Heart right ventricle (tissue), 16 donors: ENCODE measurements at regions of chr18 and their contacts with region 1.

Region 1: GRCh38 chr18:12308386-12309100 is 502 bp downstream of the TUBB6 start:
- DNase-seq: peak; percentile 83 to 85
- ATAC-seq: peak; percentile 75 to 88 (median 83)
- H3K4me3 ChIP-seq: peak overlapping the region; percentile 63 to 95 (median 82)
- H3K27ac ChIP-seq: peak overlapping the region; percentile 94 to 100 (median 99)
- H3K4me1 ChIP-seq: peaks cover 6 to 50% (median 35%) of the 10 kb centered on the region in 9 donors
- H3K27me3 ChIP-seq: peaks cover 0 to 29% (median 0%) of the 10 kb centered on the region in 7 donors
- CTCF ChIP-seq: no peak

Region 2: GRCh38 chr18:11553098-11553940 is 755.2 kb before region 1 on chr18:
- intact Hi-C with region 1: no loop called
- DNase-seq: no peak
- ATAC-seq: peak in 5 of 8 donors; percentile 23 to 75 (median 58)
- H3K4me3 ChIP-seq: no peak overlapping the region
- H3K27ac ChIP-seq: no peak overlapping the region
- H3K4me1 ChIP-seq: no peaks in the 10 kb centered on the region
- H3K27me3 ChIP-seq: peaks cover 0 to 17% (median 0%) of the 10 kb centered on the region in 7 donors
- CTCF ChIP-seq: peak; percentile 71 to 95 (median 89)

Region 3: DNA sequence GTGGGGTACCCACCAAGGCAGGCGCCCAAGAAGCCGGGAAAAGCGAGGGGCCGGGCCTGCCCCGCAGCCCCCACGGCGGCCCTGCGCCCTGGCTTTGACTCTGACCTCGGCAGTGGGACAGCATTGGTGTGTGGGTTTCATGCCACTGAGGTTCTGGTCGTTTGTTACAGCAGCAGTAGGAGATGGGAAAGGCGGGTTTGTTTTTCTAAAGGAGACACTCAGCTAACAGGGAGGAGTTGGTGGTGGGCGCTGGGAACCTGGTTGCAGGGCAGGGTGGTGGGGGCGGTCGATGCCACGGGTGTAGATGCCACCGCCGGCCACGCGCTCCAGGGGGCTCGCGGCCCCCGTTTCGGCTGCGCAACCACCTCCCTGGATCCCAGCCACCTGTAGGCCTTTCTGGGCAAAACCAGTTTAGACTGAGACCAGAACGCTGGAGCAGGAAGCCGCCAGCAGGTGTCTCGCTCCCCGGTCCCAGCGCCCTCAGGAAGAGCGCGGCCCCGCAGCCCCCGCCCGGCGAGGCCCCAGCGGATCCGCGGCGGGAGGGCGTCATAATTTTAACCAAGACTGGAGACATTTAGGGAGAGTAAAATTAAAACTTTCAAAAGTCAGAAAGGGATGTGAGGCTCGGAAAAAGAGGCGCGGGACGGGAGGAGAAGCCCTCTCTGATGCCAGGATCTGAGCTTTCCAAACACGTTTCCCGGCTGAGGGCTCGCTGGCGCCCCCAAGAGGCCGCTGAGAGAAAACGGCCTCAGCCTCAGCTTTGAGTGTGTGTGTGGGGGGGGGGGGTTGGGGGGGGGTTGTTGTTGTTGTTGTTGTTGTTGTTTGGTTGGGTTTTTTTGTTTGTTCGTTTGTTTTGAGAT is 36.9 kb before region 1 on chr18:
- intact Hi-C with region 1: loop called in 4 of 10 experiments (anchors 1 to 5 kb)
- DNase-seq: peak; percentile 78 to 79
- ATAC-seq: peak; percentile 82 to 95 (median 93)
- H3K4me3 ChIP-seq: peak overlapping the region in 9 of 10 donors; percentile 20 to 60 (median 47)
- H3K27ac ChIP-seq: peak overlapping the region in 9 of 10 donors; percentile 47 to 89 (median 72)
- H3K4me1 ChIP-seq: peaks cover 0 to 9% (median 3%) of the 10 kb centered on the region in 9 donors
- H3K27me3 ChIP-seq: no peaks in the 10 kb centered on the region
- CTCF ChIP-seq: peak; percentile 52 to 90 (median 70)

Region 4: DNA sequence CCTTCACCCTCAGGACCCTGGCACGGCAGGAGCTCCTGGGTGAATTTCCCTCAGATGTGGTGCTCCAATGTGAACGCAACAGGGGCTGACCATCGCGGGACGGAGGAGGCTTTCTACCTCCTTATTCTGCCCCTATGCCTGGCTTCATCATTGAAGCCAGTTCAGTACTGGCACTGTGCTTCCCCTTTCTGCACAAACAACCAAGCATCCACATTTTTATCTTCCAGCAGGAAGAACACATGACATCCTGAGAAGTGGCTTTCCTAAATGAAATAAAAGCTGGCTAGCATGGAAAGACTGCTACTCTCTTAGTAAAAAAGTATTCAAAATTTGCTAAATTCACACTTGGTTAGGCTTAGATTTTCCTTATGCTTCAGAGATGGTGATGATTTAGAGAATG is 43.6 kb after region 1 on chr18:
- intact Hi-C with region 1: no loop called
- DNase-seq: no peak
- ATAC-seq: peak in 2 of 8 donors; percentile 30 to 40
- H3K4me3 ChIP-seq: no peak overlapping the region
- H3K27ac ChIP-seq: peak overlapping the region in 1 of 10 donors; percentile 23
- H3K4me1 ChIP-seq: peaks cover 0 to 17% (median 0%) of the 10 kb centered on the region in 9 donors
- H3K27me3 ChIP-seq: no peaks in the 10 kb centered on the region
- CTCF ChIP-seq: no peak

Region 5: GRCh38 chr18:12492907-12493306 is 184.4 kb after region 1 on chr18:
- intact Hi-C with region 1: no loop called
- DNase-seq: no peak
- ATAC-seq: no peak
- H3K4me3 ChIP-seq: no peak overlapping the region
- H3K27ac ChIP-seq: no peak overlapping the region
- H3K4me1 ChIP-seq: no peaks in the 10 kb centered on the region
- H3K27me3 ChIP-seq: no peaks in the 10 kb centered on the region
- CTCF ChIP-seq: no peak

Region 6: GRCh38 chr18:12507007-12507406 is 198.5 kb after region 1 on chr18:
- intact Hi-C with region 1: no loop called
- DNase-seq: no peak
- ATAC-seq: no peak
- H3K4me3 ChIP-seq: no peak overlapping the region
- H3K27ac ChIP-seq: no peak overlapping the region
- H3K4me1 ChIP-seq: no peaks in the 10 kb centered on the region
- H3K27me3 ChIP-seq: no peaks in the 10 kb centered on the region
- CTCF ChIP-seq: no peak